MCF 10A (cell line): ENCODE measurements at regions of chr20 and their contacts with region 1.

Region 1: GRCh38 chr20:40689943-40690835 is 1.2 kb upstream of the MAFB start:
- DNase-seq: peak; percentile 92
- H3K4me3 Mint-ChIP-seq: peak overlapping the region; percentile 81
- H3K27ac Mint-ChIP-seq: no peak overlapping the region
- H3K4me1 Mint-ChIP-seq: no peaks in the 10 kb centered on the region
- H3K27me3 Mint-ChIP-seq: no peaks in the 10 kb centered on the region
- CTCF ChIP-seq: peak; percentile 95

Region 2: GRCh38 chr20:39112178-39112743 is 1577.9 kb before region 1 on chr20:
- CTCF ChIA-PET with region 1: interaction called, 4 read pairs
- POLR2A ChIA-PET with region 1: no interaction called
- intact Hi-C with region 1: loop called (anchors 2 kb)
- DNase-seq: peak; percentile 50
- H3K4me3 Mint-ChIP-seq: no peak overlapping the region
- H3K27ac Mint-ChIP-seq: no peak overlapping the region
- H3K4me1 Mint-ChIP-seq: peaks cover 5% of the 10 kb centered on the region
- H3K27me3 Mint-ChIP-seq: peaks cover 36% of the 10 kb centered on the region
- CTCF ChIP-seq: peak; percentile 88

Region 3: DNA sequence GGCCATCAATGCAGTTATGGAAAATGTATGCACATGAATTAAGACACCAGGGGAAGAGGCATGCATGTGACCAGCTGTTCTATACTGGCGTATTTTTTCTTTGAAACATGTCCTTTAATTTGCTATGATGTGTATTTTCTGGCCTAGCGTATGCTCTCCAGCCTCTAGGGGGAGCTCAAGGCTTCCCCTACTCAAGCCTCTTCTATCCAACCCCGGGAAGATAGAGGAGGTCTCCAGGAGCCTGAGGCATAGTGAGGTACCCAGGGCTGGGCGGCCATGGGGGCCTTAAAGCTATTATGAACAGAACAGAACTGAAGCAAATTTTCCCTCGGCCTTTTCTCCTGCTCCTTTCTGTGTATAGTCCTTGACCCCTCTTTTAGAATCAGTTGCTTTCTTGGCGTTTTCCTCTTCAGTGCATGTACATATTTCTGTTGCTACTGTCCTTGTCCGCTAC is 530.1 kb before region 1 on chr20:
- CTCF ChIA-PET with region 1: interaction called, 75 read pairs
- POLR2A ChIA-PET with region 1: interaction called, 17 read pairs
- intact Hi-C with region 1: loop called (anchors 1 kb)
- DNase-seq: peak; percentile 78
- H3K4me3 Mint-ChIP-seq: no peak overlapping the region
- H3K27ac Mint-ChIP-seq: no peak overlapping the region
- H3K4me1 Mint-ChIP-seq: no peaks in the 10 kb centered on the region
- H3K27me3 Mint-ChIP-seq: no peaks in the 10 kb centered on the region
- CTCF ChIP-seq: peak; percentile 78

Region 4: DNA sequence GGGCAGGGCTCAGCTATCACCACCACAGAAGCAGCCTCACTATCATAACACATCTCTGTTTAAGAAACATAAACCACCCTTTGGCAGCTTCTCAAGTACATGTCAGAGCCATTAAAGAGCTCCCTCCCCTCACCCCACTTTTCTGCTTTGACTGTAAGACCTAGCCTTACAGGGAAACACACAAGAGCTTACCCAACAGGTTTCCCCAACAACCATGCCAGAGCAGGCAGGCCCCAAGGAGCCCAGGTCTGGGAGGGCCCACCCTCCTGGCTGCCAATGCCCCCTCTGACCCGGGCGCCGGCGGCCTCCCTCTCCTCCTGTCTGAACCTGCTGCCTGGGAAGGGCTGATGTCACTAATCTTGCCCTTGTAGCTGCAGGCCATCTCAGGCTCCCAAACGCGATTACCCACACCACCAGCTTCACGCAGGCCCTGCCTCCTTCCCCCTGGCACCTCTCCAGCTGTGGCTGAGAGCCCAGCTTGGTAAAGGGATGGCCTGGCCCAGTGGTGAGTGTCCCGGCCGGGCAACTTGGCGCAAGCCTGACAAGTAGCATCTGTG is 403.1 kb before region 1 on chr20:
- CTCF ChIA-PET with region 1: interaction called, 71 read pairs
- POLR2A ChIA-PET with region 1: interaction called, 105 read pairs
- intact Hi-C with region 1: no loop called
- DNase-seq: peak; percentile 98
- H3K4me3 Mint-ChIP-seq: peak overlapping the region; percentile 40
- H3K27ac Mint-ChIP-seq: peak overlapping the region; percentile 92
- H3K4me1 Mint-ChIP-seq: peaks cover 36% of the 10 kb centered on the region
- H3K27me3 Mint-ChIP-seq: no peaks in the 10 kb centered on the region
- CTCF ChIP-seq: no peak

Region 5: GRCh38 chr20:40563296-40563944 is 126.8 kb before region 1 on chr20:
- CTCF ChIA-PET with region 1: interaction called, 36 read pairs
- POLR2A ChIA-PET with region 1: interaction called, 114 read pairs
- intact Hi-C with region 1: loop called (anchors 1 kb)
- DNase-seq: peak; percentile 97
- H3K4me3 Mint-ChIP-seq: peak overlapping the region; percentile 2
- H3K27ac Mint-ChIP-seq: peak overlapping the region; percentile 81
- H3K4me1 Mint-ChIP-seq: peaks cover 40% of the 10 kb centered on the region
- H3K27me3 Mint-ChIP-seq: no peaks in the 10 kb centered on the region
- CTCF ChIP-seq: no peak

Region 6: GRCh38 chr20:40654876-40655275 is 35.3 kb before region 1 on chr20:
- CTCF ChIA-PET with region 1: interaction called, 48 read pairs
- POLR2A ChIA-PET with region 1: interaction called, 105 read pairs
- intact Hi-C with region 1: no loop called
- DNase-seq: peak; percentile 81
- H3K4me3 Mint-ChIP-seq: no peak overlapping the region
- H3K27ac Mint-ChIP-seq: peak overlapping the region; percentile 88
- H3K4me1 Mint-ChIP-seq: peaks cover 43% of the 10 kb centered on the region
- H3K27me3 Mint-ChIP-seq: no peaks in the 10 kb centered on the region
- CTCF ChIP-seq: no peak

Region 7: GRCh38 chr20:40826699-40827098 is 136.5 kb after region 1 on chr20:
- CTCF ChIA-PET with region 1: no interaction called
- POLR2A ChIA-PET with region 1: no interaction called
- intact Hi-C with region 1: no loop called
- DNase-seq: no peak
- H3K4me3 Mint-ChIP-seq: no peak overlapping the region
- H3K27ac Mint-ChIP-seq: no peak overlapping the region
- H3K4me1 Mint-ChIP-seq: no peaks in the 10 kb centered on the region
- H3K27me3 Mint-ChIP-seq: no peaks in the 10 kb centered on the region
- CTCF ChIP-seq: no peak

Region 8: DNA sequence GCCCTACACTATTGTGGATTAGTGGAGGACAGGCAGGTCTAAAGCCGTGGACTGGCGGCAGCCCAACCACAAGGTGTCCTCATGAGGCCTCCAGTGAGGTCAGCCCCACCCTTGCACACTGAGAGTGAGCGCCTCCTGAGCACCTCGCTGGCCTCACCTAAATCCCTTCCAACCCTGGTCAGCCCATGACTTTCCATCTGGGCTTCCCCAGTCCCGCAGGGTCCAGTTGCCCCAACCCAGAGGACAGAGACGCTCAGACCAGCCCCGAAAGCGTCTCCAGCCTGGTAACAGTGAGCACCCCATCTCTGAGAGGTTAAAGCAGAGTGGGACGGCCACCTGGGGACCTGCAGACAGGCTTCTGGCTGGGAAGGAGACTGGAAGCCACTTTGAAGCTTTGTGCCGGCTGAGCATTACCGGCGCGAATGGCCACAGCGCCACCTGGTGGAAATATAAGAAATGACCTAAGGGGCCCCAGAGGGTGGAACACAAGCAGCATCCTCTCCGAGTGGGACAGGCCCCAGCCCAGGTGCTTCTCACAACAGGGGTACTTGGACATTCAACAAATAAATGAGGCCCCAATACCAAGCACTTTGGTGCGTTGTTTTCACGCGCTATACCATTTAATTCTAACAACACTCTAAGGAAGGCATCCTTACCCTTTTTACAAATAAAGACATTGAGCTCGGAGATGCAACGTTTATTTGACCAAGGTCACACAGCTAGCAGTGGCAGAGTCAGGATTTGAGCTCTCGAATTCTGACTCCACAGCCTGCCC is 272.7 kb after region 1 on chr20:
- CTCF ChIA-PET with region 1: interaction called, 18 read pairs
- POLR2A ChIA-PET with region 1: interaction called, 7 read pairs
- intact Hi-C with region 1: loop called (anchors 5 kb)
- DNase-seq: peak; percentile 71
- H3K4me3 Mint-ChIP-seq: no peak overlapping the region
- H3K27ac Mint-ChIP-seq: no peak overlapping the region
- H3K4me1 Mint-ChIP-seq: peaks cover 20% of the 10 kb centered on the region
- H3K27me3 Mint-ChIP-seq: no peaks in the 10 kb centered on the region
- CTCF ChIP-seq: peak; percentile 84